PC-9 (cell line): ENCODE measurements at regions of chr15 and their contacts with region 1.

Region 1: GRCh38 chr15:96374499-96374898 is 44.0 kb downstream of the NR2F2 start:
- DNase-seq: no peak
- H3K4me3 ChIP-seq: no peak overlapping the region
- H3K27ac ChIP-seq: no peak overlapping the region
- H3K4me1 ChIP-seq: no peaks in the 10 kb centered on the region
- H3K27me3 ChIP-seq: no peaks in the 10 kb centered on the region
- CTCF ChIP-seq: no peak

Region 2: GRCh38 chr15:96170979-96171739 is 203.3 kb before region 1 on chr15:
- CTCF ChIA-PET with region 1: interaction called, 19 read pairs
- POLR2A ChIA-PET with region 1: no interaction called
- intact Hi-C with region 1: no loop called
- DNase-seq: peak in 1 of 2 experiments; percentile 14
- H3K4me3 ChIP-seq: no peak overlapping the region
- H3K27ac ChIP-seq: no peak overlapping the region
- H3K4me1 ChIP-seq: no peaks in the 10 kb centered on the region
- H3K27me3 ChIP-seq: no peaks in the 10 kb centered on the region
- CTCF ChIP-seq: no peak

Region 3: GRCh38 chr15:96340598-96341512 is 33.6 kb before region 1 on chr15:
- CTCF ChIA-PET with region 1: no interaction called
- POLR2A ChIA-PET with region 1: no interaction called
- intact Hi-C with region 1: no loop called
- DNase-seq: no peak
- H3K4me3 ChIP-seq: no peak overlapping the region
- H3K27ac ChIP-seq: no peak overlapping the region
- H3K4me1 ChIP-seq: peaks cover 34% of the 10 kb centered on the region
- H3K27me3 ChIP-seq: no peaks in the 10 kb centered on the region
- CTCF ChIP-seq: no peak

Region 4: DNA sequence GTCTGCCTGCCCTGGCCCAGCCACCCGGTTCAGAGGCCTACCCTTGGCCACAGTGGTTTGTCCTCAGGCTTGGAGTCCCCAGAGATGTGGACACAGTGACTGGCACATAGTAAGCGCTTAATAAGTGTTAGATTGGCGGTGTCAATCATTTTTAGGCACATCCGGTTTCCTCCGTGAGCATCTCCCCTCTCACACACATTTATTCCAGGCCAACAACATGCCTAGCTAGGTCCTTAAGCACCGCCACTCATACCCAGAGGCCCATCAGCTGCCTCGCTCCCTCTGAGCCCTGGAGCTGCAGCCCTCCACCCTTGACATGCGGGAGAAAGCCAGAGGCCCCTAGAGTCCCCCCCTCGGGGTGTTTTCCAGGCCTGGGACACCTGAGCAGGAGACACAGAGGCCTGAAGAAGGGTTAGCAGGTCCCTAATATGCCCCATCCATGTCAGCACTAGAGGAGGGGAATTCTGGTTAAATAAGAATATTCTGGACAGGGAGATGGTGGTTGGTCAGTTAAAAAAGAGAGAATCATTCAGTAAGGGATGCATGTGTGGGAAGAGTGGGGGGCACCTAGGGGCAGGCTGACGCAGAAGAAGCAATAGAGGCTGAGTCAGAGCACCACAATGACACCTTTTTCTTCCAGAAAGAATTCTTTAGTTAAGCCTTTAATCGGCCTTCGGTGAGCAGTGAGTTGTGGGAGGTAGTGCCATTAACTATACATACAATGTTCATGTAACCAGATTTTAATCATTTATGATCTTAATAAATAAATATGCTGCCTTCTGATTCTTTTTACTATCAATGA is 21.7 kb before region 1 on chr15:
- CTCF ChIA-PET with region 1: interaction called, 16 read pairs
- POLR2A ChIA-PET with region 1: no interaction called
- intact Hi-C with region 1: no loop called
- DNase-seq: no peak
- H3K4me3 ChIP-seq: no peak overlapping the region
- H3K27ac ChIP-seq: no peak overlapping the region
- H3K4me1 ChIP-seq: no peaks in the 10 kb centered on the region; the same call in 1 of the 2 replicates
- H3K27me3 ChIP-seq: no peaks in the 10 kb centered on the region
- CTCF ChIP-seq: no peak